ENCODE measurements at regions of chr15 and their contacts with region 1.

Region 1: DNA sequence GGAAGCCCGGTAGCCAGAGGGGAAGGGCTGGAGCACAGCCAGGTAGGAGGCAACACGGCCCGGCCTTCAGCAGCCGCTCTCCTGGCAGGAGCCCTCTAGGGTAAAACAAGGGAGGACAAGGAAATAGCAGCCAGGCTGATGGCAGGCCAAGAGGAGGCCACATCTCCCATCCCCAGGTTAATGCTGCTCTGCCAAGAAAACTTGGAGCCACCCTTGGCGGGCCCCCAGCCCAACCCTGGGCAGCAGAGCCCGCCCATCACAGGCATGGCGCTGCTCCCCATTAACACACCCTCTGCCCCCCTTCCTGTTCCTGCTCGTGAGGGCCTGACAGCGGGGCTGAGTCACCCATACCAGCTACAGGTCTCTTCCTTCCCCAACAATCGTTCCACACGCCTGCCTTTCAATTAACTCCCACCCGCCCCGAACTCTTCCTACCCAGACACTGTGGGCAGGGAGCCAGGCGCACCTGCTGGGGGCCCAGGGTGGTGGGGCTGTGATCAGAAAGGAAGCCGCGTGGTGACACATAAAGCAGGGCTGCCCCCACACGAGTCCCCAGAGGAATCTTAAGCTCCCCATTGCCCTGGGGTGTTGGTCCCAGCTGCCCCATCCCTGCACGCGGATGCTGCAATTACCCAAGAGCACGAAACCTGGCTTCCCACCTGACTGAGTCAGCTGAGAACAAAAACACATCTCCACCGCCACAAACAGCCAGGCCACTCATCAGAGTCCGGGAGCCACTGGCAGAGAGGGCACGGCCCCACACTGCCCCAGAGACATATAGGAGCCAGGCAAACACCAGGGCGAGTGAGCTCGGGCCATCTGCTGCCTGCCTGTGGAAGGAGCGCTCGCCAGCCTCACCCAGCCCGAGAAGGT is at the start of gene C15orf62:
- DNase-seq: peak; percentile 82
- H3K4me3 ChIP-seq: no peak within 1 kb of the TSS
- H3K27ac ChIP-seq: peak within 1 kb of the TSS; percentile 76 to 80
- H3K4me1 ChIP-seq: peaks cover 19% of the 10 kb centered on the region
- H3K27me3 ChIP-seq: no peaks in the 10 kb centered on the region
- CTCF ChIP-seq: no peak
- POLR2A ChIP-seq: peak; percentile 49
- total RNA-seq, gene C15orf62: 0.51 to 1.3 TPM

Region 2: GRCh38 chr15:40803688-40804087 is 34.2 kb after region 1 on chr15:
- intact Hi-C with region 1: loop called (anchors 5 kb)
- DNase-seq: no peak
- H3K4me3 ChIP-seq: no peak overlapping the region
- H3K27ac ChIP-seq: no peak overlapping the region
- H3K4me1 ChIP-seq: peaks cover 3% of the 10 kb centered on the region
- H3K27me3 ChIP-seq: no peaks in the 10 kb centered on the region
- CTCF ChIP-seq: no peak
- POLR2A ChIP-seq: no peak